ENCODE measurements at regions of chr6 and their contacts with region 1.

Region 1: GRCh38 chr6:99548706-99549105 is 19.8 kb downstream of the CCNC start:
- DNase-seq: no peak
- H3K4me3 ChIP-seq: no peak overlapping the region
- H3K27ac ChIP-seq: no peak overlapping the region
- H3K4me1 ChIP-seq: no peaks in the 10 kb centered on the region
- H3K27me3 ChIP-seq: no peaks in the 10 kb centered on the region
- CTCF ChIP-seq: no peak
- EP300 ChIP-seq: no peak
- POLR2A ChIP-seq: no peak

Region 2: DNA sequence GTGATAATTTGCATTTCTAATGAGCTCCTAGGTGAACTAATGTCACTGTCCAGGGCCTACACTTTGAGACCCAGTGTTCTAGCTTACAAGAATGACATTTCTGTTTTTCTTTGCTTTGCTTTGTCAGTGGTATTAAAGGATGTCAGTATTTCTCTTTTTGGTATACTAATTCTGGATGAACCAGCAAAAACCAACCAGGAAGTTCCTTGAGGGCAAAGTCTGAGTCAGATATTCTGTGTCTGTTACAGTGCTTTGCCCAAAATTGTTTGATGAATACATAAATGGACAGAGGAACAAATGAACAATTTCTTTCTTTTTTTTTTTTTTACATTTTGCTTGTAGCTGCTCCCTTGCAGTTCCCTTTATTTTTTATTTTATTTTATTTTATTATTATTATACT is 170.1 kb before region 1 on chr6:
- in situ Hi-C with region 1: no loop called
- intact Hi-C with region 1: no loop called
- DNase-seq: no peak
- H3K4me3 ChIP-seq: no peak overlapping the region
- H3K27ac ChIP-seq: no peak overlapping the region
- H3K4me1 ChIP-seq: no peaks in the 10 kb centered on the region
- H3K27me3 ChIP-seq: no peaks in the 10 kb centered on the region
- CTCF ChIP-seq: no peak
- EP300 ChIP-seq: no peak
- POLR2A ChIP-seq: no peak

Region 3: GRCh38 chr6:99393698-99394531 is 154.8 kb before region 1 on chr6 and contains the start of gene COQ3:
- in situ Hi-C with region 1: no loop called
- intact Hi-C with region 1: no loop called
- DNase-seq: peak; percentile 68
- H3K4me3 ChIP-seq: peak within 1 kb of the TSS; percentile 74 to 89 (median 78)
- H3K27ac ChIP-seq: peak within 1 kb of the TSS; percentile 83 to 88 (median 86)
- H3K4me1 ChIP-seq: peaks cover 0 to 10% (median 1%) of the 10 kb centered on the region in 4 donors
- H3K27me3 ChIP-seq: no peaks in the 10 kb centered on the region
- CTCF ChIP-seq: no peak
- EP300 ChIP-seq: no peak
- POLR2A ChIP-seq: peak; percentile 25
- total RNA-seq, gene COQ3: 4.9 to 5.1 TPM in 2 of 4 donors, not detected in the others

Region 4: GRCh38 chr6:99425647-99426453 is 122.9 kb before region 1 on chr6:
- in situ Hi-C with region 1: no loop called
- intact Hi-C with region 1: no loop called
- DNase-seq: peak; percentile 88
- H3K4me3 ChIP-seq: peak overlapping the region; percentile 60 to 74 (median 65)
- H3K27ac ChIP-seq: peak overlapping the region; percentile 95 to 98 (median 96)
- H3K4me1 ChIP-seq: peaks cover 20 to 54% (median 41%) of the 10 kb centered on the region in 4 donors
- H3K27me3 ChIP-seq: no peaks in the 10 kb centered on the region
- CTCF ChIP-seq: peak; percentile 28 to 67 (median 42)
- EP300 ChIP-seq: no peak
- POLR2A ChIP-seq: no peak

Region 5: GRCh38 chr6:99563056-99563723 is 14.5 kb after region 1 on chr6:
- in situ Hi-C with region 1: no loop called
- intact Hi-C with region 1: loop called (anchors 2 kb)
- DNase-seq: no peak
- H3K4me3 ChIP-seq: no peak overlapping the region
- H3K27ac ChIP-seq: no peak overlapping the region
- H3K4me1 ChIP-seq: peaks cover 6 to 16% (median 12%) of the 10 kb centered on the region in 4 donors
- H3K27me3 ChIP-seq: no peaks in the 10 kb centered on the region
- CTCF ChIP-seq: no peak
- EP300 ChIP-seq: no peak
- POLR2A ChIP-seq: no peak

Measured in transverse colon (tissue), 4 donors.